ENCODE measurements at regions of chr6 and their contacts with region 1.

Region 1: GRCh38 chr6:2738373-2738979 is 12.2 kb downstream of the MYLK4 start:
- DNase-seq: peak; percentile 65

Region 2: DNA sequence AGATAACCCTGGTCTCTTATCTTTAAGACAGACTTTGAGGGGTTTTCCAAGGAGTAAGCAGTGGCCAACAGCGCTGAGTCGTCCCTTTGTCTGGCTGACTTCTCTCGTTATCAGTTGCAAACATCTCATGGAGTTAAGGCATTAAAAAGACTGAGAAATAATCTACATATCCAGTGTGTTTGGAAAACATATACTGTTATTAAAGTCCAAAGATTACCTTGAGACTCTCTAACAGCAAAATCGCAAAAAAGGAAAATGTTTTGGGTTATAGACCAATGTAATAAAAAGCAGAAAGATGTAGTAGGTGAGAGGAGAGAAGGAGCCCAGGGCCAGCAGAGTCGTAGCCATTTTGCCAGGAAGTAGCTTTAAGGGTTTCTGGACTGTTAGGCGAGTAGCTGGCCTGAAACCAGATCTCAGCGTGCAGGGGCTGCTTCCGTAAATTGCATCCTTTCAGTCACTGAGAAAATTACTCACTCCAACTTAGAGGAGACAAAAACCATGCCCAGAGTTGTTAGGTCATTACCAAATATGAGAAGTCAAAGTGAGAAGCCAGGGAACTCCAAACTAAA is 12.4 kb before region 1 on chr6:
- CTCF ChIA-PET with region 1: interaction called, 4 read pairs
- POLR2A ChIA-PET with region 1: interaction called, 13 read pairs
- DNase-seq: peak; percentile 34

Region 3: DNA sequence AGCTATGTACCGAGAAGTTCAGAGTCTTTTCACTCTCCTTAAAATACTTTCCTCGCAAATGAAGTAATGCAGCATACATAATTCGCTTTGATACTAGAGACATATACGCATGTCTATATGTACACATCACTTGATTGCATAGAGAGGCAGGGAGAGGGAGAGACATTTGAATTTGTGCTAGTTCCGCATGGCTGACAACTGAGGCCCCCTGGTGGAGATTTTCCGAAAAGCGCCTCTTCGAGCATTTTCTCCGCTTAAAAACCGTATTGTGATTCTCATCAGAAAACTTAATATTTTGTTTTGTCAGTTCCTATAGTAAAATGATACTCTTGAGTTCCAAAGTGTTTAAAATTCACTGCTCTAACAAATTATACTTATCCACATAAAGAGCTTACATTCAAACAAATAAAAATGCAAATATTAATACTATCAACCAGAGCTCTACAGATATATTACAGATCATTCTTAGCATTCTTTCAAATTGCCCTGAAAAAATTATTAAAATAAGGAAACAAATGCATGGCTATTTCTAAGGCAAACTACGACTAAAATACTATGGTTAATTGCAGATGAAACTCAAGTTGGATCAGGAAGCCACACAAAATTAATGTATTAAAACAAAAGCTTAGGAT is 11.6 kb after region 1 on chr6:
- CTCF ChIA-PET with region 1: interaction called, 46 read pairs
- POLR2A ChIA-PET with region 1: no interaction called
- DNase-seq: peak; percentile 64

Region 4: GRCh38 chr6:2760882-2761842 is 22.7 kb after region 1 on chr6:
- CTCF ChIA-PET with region 1: interaction called, 18 read pairs
- POLR2A ChIA-PET with region 1: interaction called, 3 read pairs
- DNase-seq: no peak

Region 5: DNA sequence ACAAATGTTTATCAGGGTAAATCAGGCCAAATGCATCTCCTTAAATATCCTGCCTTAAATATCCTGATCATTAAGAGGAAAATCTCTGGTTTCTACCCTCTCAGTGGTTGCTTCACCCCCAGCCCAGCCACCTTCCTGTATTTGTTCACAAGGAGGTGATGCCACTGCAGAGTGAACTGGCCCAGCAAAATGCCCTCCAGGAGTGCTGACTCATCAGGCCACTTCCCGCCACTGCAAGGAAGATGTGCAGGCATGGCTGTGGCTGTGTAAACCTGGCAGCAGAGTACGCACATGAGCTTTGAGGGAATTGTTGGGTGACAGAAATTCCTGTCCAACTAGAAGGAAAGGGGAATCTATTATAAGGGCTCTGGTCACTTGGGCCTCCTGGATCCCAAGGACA is 275.0 kb after region 1 on chr6:
- CTCF ChIA-PET with region 1: no interaction called
- POLR2A ChIA-PET with region 1: no interaction called
- DNase-seq: no peak

Measured in HEK293T (cell line).